Activated CD4-positive, alpha-beta T cell treated with anti-CD3 and anti-CD28 coated beads, Interleukin-2, amount 10 ng/mL, durations not matched to agents 7 days and 5 days (primary cell): ENCODE measurements at regions of chr14 and their contacts with region 1.

Region 1: GRCh38 chr14:75132382-75133086 is 5.7 kb upstream of the NEK9 start:
- DNase-seq: peak; percentile 79
- H3K4me3 Mint-ChIP-seq: no peak overlapping the region
- H3K27ac Mint-ChIP-seq: no peak overlapping the region
- H3K4me1 Mint-ChIP-seq: peaks cover 20% of the 10 kb centered on the region
- H3K27me3 Mint-ChIP-seq: no peaks in the 10 kb centered on the region

Region 2: GRCh38 chr14:75032939-75033338 is 99.6 kb before region 1 on chr14:
- CTCF ChIA-PET with region 1: no interaction called
- POLR2A ChIA-PET with region 1: no interaction called
- DNase-seq: no peak
- H3K4me3 Mint-ChIP-seq: no peak overlapping the region
- H3K27ac Mint-ChIP-seq: no peak overlapping the region
- H3K4me1 Mint-ChIP-seq: no peaks in the 10 kb centered on the region
- H3K27me3 Mint-ChIP-seq: no peaks in the 10 kb centered on the region

Region 3: GRCh38 chr14:75101491-75101890 is 31.0 kb before region 1 on chr14:
- CTCF ChIA-PET with region 1: no interaction called
- POLR2A ChIA-PET with region 1: no interaction called
- DNase-seq: no peak
- H3K4me3 Mint-ChIP-seq: no peak overlapping the region
- H3K27ac Mint-ChIP-seq: no peak overlapping the region
- H3K4me1 Mint-ChIP-seq: no peaks in the 10 kb centered on the region
- H3K27me3 Mint-ChIP-seq: no peaks in the 10 kb centered on the region

Region 4: DNA sequence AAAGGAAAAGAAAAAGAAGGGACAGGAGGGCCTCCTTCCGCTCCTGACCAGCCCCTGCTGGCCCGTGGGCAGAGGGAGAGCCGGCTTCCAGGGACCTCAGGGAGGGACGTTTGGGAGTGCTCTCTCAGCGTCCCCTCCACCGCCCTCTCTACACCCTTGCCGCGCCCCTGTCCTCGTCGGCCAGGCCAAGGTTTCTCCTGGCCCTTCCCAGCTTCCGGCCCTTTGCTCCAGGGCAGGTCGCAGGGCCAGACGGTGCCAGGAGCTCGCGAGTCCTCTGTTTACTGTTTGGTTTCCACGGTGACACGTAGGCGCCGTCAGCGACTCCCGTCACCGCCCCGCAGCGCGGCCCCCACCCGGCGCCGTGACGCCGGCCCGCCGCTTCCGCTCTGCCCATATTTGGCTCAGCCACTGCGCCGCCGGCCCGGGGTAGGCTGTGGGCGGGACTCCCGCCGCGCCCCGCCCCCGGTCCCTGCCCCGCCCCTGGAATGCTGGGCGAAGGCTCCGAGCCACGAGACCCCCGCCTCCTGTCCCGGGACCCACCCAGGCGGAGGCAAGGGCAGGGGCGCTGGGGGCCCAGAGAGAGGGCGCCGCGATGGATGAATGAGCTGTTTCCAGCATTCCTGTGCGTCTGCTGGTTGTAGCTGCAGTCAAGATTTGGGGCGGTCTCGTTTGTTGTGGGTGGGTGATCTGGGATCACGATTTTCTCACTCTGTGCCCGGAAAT is 161.5 kb after region 1 on chr14:
- CTCF ChIA-PET with region 1: interaction called, 10 read pairs
- POLR2A ChIA-PET with region 1: no interaction called
- DNase-seq: peak; percentile 94
- H3K4me3 Mint-ChIP-seq: peak overlapping the region; percentile 75
- H3K27ac Mint-ChIP-seq: peak overlapping the region; percentile 87
- H3K4me1 Mint-ChIP-seq: peaks cover 23% of the 10 kb centered on the region
- H3K27me3 Mint-ChIP-seq: peaks cover 21% of the 10 kb centered on the region